Activated CD8-positive, alpha-beta T cell treated with anti-CD3 and anti-CD28 coated beads, Interleukin-2, amount 10 ng/mL, durations not matched to agents 7 days and 5 days (primary cell): ENCODE measurements at regions of chr2 and their contacts with region 1.

Region 1: DNA sequence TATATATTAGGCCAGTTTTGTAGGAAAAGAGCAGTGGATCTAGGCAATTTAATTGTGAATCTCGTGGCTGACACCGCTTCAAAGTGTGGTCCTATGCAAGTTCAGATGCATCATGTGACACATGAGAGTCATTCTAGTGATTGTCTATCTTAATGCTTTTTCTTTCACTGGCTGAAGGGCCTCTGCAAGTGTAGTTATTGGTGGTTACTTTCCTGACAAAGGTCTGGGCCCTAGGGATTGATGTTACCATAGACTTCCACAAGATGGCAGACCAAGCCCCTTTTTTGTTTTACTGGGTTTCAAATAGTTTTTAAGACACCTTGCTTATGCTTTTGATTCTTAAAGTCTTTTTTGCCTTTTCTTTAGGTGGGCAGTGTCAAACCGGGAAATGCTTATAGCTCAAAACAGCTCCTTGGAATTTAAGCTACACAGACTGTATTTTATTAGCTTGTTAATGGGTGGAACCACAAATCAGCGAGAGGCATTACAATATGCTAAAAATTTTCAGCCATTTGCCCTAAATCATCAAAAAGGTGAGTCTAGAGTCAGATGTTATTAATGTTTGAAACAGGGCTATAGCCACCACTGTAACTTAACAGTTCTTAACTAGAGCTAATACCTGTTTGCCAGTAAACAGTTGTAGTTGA is 25.9 kb downstream of the CD8A start:
- DNase-seq: peak; percentile 78
- ATAC-seq: peak; percentile 85
- H3K4me3 Mint-ChIP-seq: no peak overlapping the region
- H3K27ac Mint-ChIP-seq: peak overlapping the region; percentile 55
- H3K4me1 Mint-ChIP-seq: peaks cover 39% of the 10 kb centered on the region
- H3K27me3 Mint-ChIP-seq: no peaks in the 10 kb centered on the region

Region 2: DNA sequence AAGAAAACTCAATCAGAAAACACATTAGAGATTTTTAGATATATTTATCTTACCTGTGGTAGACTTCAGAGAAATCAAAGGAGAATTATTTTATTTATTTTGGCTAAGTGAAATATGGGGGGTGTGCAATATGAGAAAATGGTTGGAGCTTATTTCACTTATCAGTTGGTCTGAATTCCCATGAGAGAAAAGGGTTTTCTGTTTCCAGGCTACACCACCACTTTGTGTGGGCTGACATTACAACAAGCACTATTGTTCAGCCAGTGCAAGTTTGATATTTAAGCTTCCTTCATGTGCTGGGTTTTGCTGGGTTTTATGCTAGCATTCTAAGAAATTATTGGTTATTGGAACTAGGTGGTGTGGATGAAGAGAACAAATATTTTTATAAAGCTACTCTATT is 11.2 kb before region 1 on chr2:
- CTCF ChIA-PET with region 1: interaction called, 10 read pairs
- POLR2A ChIA-PET with region 1: no interaction called
- DNase-seq: no peak
- ATAC-seq: no peak
- H3K4me3 Mint-ChIP-seq: no peak overlapping the region
- H3K27ac Mint-ChIP-seq: no peak overlapping the region
- H3K4me1 Mint-ChIP-seq: peaks cover 5% of the 10 kb centered on the region
- H3K27me3 Mint-ChIP-seq: no peaks in the 10 kb centered on the region

Region 3: GRCh38 chr2:86775338-86775737 is 10.6 kb after region 1 on chr2:
- CTCF ChIA-PET with region 1: interaction called, 23 read pairs
- POLR2A ChIA-PET with region 1: no interaction called
- DNase-seq: no peak
- ATAC-seq: no peak
- H3K4me3 Mint-ChIP-seq: no peak overlapping the region
- H3K27ac Mint-ChIP-seq: no peak overlapping the region
- H3K4me1 Mint-ChIP-seq: peaks cover 15% of the 10 kb centered on the region
- H3K27me3 Mint-ChIP-seq: no peaks in the 10 kb centered on the region

Region 4: GRCh38 chr2:86783615-86784339 is 19.0 kb after region 1 on chr2:
- CTCF ChIA-PET with region 1: interaction called, 23 read pairs
- POLR2A ChIA-PET with region 1: interaction called, 4 read pairs
- DNase-seq: no peak
- ATAC-seq: no peak
- H3K4me3 Mint-ChIP-seq: no peak overlapping the region
- H3K27ac Mint-ChIP-seq: peak overlapping the region; percentile 99
- H3K4me1 Mint-ChIP-seq: peaks cover 63% of the 10 kb centered on the region
- H3K27me3 Mint-ChIP-seq: no peaks in the 10 kb centered on the region

Region 5: GRCh38 chr2:86790676-86791572 is 26.1 kb after region 1 on chr2 and contains the start of gene CD8A:
- CTCF ChIA-PET with region 1: interaction called, 23 read pairs
- POLR2A ChIA-PET with region 1: interaction called, 7 read pairs
- DNase-seq: peak; percentile 91
- ATAC-seq: peak; percentile 41
- H3K4me3 Mint-ChIP-seq: peak within 1 kb of the TSS; percentile 95
- H3K27ac Mint-ChIP-seq: peak within 1 kb of the TSS; percentile 99
- H3K4me1 Mint-ChIP-seq: peaks cover 63% of the 10 kb centered on the region
- H3K27me3 Mint-ChIP-seq: no peaks in the 10 kb centered on the region
- total RNA-seq, gene CD8A: 667 to 675 TPM

Region 6: DNA sequence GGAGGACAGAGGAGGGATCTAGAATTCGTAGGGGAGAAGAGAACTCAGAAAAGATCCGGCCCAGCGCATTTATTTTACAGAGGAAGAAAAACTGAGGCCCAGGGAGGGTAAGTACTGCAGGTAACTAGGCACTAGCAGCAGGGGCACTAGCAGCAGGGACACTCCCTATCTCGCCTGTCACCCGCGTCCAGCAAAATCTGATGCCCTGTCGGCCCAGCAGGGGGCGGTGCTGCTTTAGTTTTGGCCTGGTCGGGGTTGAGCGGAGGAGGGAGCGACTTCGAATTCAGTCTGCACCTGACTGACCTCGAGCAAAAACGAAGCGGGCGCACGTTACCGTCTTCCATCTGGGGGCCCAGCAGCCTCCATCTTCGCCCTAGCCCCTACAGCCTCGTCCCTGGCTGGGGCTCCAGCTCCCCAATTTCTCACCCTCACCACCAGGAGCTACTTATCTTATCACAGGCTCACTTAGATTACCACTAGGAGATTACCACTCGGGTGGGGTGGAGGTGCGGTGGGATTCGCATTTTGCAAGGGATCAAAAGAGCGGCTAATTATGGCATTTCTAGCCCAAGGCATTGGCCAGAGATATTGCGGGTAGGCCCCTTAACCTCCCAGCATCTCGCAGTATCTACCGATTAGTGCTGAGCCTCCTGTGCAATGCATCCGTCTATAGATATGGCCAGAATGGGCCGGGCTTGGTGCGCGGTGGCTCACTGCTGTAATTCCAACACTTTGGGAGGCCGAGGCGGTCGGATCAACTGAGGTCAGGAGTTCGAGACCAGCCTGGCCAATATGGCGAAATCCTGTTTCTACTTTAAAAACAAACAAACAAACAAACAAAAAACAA is 43.8 kb after region 1 on chr2:
- CTCF ChIA-PET with region 1: interaction called, 120 read pairs
- POLR2A ChIA-PET with region 1: interaction called, 8 read pairs
- DNase-seq: peak; percentile 98
- ATAC-seq: peak; percentile 73
- H3K4me3 Mint-ChIP-seq: peak overlapping the region; percentile 93
- H3K27ac Mint-ChIP-seq: peak overlapping the region; percentile 94
- H3K4me1 Mint-ChIP-seq: peaks cover 50% of the 10 kb centered on the region
- H3K27me3 Mint-ChIP-seq: no peaks in the 10 kb centered on the region